SK-N-SH (cell line): ENCODE measurements at regions of chr15 and their contacts with region 1.

Region 1: DNA sequence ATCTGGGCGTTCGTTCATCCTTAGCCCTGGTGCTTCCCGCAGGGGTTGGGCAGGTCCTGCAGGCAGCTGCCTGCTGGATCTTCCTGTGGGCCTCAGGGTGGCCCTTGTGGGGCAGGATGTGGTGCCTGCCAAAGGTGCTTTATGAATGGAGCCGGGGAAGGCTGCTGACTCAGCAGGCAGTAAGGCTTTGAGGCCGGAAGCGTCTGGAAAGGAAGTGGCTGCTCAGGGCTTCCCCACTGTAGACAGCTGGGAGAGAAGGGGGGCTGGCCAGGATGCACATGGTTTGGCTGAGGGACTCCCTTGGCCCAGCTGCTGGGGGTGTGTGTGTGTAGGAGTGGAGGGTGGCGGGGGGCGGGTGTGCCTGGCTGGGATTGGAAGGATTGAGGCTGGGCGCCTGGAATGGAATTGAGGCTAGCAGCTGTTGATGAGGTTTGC is 12.9 kb downstream of the CD276 start:
- DNase-seq: peak; percentile 84
- H3K4me3 ChIP-seq: peak overlapping the region in 1 of 2 experiments; percentile 13; a peak in 1 of 4 replicates
- H3K27ac ChIP-seq: peak overlapping the region; percentile 58 to 69
- H3K4me1 ChIP-seq: peaks cover 9 to 20% of the 10 kb centered on the region in 2 experiments; a peak in 2 of 4 replicates
- H3K27me3 ChIP-seq: no peaks in the 10 kb centered on the region
- CTCF ChIP-seq: no peak
- EP300 ChIP-seq: peak; percentile 35 to 54; a peak in 1 of 4 replicates
- RAD21 ChIP-seq: 0 out of 2 replicates have a peak, but pooled peaks have one; percentile 1

Region 2: GRCh38 chr15:73284090-73284716 is 412.8 kb before region 1 on chr15:
- CTCF ChIA-PET with region 1: interaction called, 26 read pairs
- POLR2A ChIA-PET with region 1: no interaction called
- DNase-seq: peak; percentile 56
- H3K4me3 ChIP-seq: no peak overlapping the region
- H3K27ac ChIP-seq: peak overlapping the region; percentile 26 to 37; a peak in 3 of 4 replicates
- H3K4me1 ChIP-seq: peaks cover 5 to 11% of the 10 kb centered on the region in 2 experiments
- H3K27me3 ChIP-seq: no peaks in the 10 kb centered on the region
- CTCF ChIP-seq: peak; percentile 65
- EP300 ChIP-seq: peak in 1 of 2 experiments; percentile 39; a peak in 1 of 4 replicates
- RAD21 ChIP-seq: peak; percentile 80

Region 3: GRCh38 chr15:73560501-73561117 is 136.4 kb before region 1 on chr15:
- CTCF ChIA-PET with region 1: interaction called, 96 read pairs
- POLR2A ChIA-PET with region 1: no interaction called
- DNase-seq: peak; percentile 42
- H3K4me3 ChIP-seq: no peak overlapping the region
- H3K27ac ChIP-seq: no peak overlapping the region
- H3K4me1 ChIP-seq: peaks cover 0 to 2% of the 10 kb centered on the region in 2 experiments; a peak in 2 of 4 replicates
- H3K27me3 ChIP-seq: no peaks in the 10 kb centered on the region
- CTCF ChIP-seq: peak; percentile 61
- EP300 ChIP-seq: no peak
- RAD21 ChIP-seq: peak; percentile 81

Region 4: DNA sequence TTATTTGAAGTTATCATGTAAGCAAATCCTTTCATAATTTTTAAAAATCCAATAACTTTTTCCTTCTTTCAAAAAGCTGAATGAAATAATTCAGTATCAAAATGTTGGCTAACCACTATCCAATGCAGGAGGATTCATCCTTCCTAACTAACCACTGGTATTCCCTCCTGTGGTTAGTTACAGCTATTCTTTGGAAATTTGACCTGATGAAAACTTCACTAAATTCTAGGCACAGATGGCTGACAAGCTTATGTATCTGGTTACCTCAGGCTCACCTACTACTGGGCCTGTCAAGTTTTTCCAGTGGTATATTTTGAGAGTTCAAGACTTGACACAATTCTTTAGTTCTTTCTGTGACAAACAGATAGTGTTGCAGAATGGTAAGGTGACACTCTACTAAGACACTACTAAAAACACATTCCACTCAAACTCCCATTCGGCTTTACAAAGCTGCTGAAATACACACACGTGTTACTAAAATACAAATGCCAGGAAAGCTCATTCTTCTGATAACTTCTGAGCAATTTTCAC is 79.7 kb before region 1 on chr15:
- CTCF ChIA-PET with region 1: interaction called, 10 read pairs
- POLR2A ChIA-PET with region 1: no interaction called
- DNase-seq: no peak
- H3K4me3 ChIP-seq: no peak overlapping the region
- H3K27ac ChIP-seq: no peak overlapping the region
- H3K4me1 ChIP-seq: peaks cover 0 to 6% of the 10 kb centered on the region in 2 experiments; a peak in 3 of 4 replicates
- H3K27me3 ChIP-seq: no peaks in the 10 kb centered on the region
- CTCF ChIP-seq: no peak
- EP300 ChIP-seq: no peak
- RAD21 ChIP-seq: no peak

Region 5: GRCh38 chr15:73650416-73651126 is 46.5 kb before region 1 on chr15:
- CTCF ChIA-PET with region 1: interaction called, 17 read pairs
- POLR2A ChIA-PET with region 1: no interaction called
- DNase-seq: peak; percentile 49
- H3K4me3 ChIP-seq: peak overlapping the region in 1 of 2 experiments; percentile 26; a peak in 1 of 4 replicates
- H3K27ac ChIP-seq: peak overlapping the region; percentile 39 to 77; a peak in 3 of 4 replicates
- H3K4me1 ChIP-seq: no peaks in the 10 kb centered on the region; a peak in 2 of 4 replicates
- H3K27me3 ChIP-seq: no peaks in the 10 kb centered on the region
- CTCF ChIP-seq: no peak
- EP300 ChIP-seq: peak in 1 of 2 experiments; percentile 29; a peak in 1 of 4 replicates
- RAD21 ChIP-seq: no peak

Region 6: DNA sequence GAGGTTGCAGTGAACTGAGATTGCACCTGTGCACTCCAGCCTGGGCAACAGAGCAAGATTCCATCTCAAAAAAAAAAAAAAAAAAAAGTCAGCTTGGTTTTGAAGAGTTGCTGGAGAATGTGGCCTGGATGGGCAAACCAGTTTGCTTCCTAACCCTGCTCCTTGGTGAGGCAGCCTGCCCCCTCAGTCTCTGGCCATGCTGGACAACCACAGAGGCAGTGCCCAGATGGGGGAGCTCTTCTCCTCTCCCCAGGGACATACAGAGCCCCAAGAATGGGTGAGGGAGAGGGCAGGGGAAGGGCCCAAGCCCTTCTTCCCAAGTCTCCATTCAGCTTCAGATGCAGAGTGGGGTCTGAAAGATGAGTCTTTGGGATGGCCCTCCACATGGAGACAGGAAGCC is 15.0 kb after region 1 on chr15:
- CTCF ChIA-PET with region 1: interaction called, 41 read pairs
- POLR2A ChIA-PET with region 1: no interaction called
- DNase-seq: no peak
- H3K4me3 ChIP-seq: no peak overlapping the region
- H3K27ac ChIP-seq: no peak overlapping the region
- H3K4me1 ChIP-seq: peaks cover 0 to 4% of the 10 kb centered on the region in 2 experiments; a peak in 1 of 4 replicates
- H3K27me3 ChIP-seq: no peaks in the 10 kb centered on the region
- CTCF ChIP-seq: peak; percentile 30; the same call in 1 of the 2 replicates
- EP300 ChIP-seq: no peak
- RAD21 ChIP-seq: peak; percentile 36; the same call in 1 of the 2 replicates

Region 7: GRCh38 chr15:73746883-73747282 is 49.8 kb after region 1 on chr15:
- CTCF ChIA-PET with region 1: no interaction called
- POLR2A ChIA-PET with region 1: no interaction called
- DNase-seq: no peak
- H3K4me3 ChIP-seq: no peak overlapping the region
- H3K27ac ChIP-seq: no peak overlapping the region
- H3K4me1 ChIP-seq: peaks cover 7% of the 10 kb centered on the region in 2 experiments; a peak in 1 of 4 replicates
- H3K27me3 ChIP-seq: no peaks in the 10 kb centered on the region
- CTCF ChIP-seq: no peak
- EP300 ChIP-seq: no peak
- RAD21 ChIP-seq: no peak

Region 8: DNA sequence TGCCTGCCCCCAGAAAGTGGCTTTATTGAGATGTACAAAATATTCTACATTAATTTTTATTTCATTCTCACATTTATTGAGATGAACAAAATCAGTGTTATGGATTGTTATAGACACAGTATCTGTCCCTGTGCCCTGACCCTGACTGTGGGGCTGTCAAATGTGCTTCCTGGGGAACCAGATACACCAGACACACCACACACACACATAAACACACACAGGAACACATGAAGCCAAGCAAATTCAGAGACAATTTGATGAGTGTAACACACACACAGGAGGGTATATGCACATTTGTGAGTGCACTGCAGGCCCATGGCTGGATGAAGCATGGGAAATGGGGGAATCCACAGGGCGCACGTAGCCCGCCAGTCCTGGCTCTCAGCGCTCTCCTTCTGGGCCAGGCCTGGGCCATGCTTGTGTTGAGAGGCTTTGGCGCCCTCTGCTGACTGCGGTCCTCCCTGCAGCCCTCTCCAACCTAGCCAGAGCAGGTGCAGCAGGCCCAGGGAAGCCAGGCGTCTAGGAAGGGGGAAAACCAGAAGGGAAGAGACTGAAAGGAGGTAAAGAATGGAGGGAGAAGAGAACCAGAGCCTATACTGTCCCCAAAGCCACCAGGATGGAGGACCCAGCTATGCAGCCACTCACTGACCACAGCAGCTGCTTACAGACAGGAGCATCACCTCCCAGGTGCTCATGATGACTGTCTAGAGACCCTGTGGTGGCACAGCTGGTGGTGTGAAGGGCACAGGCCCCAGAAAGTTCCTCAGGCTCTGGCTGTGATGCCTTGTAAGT is 211.2 kb after region 1 on chr15:
- CTCF ChIA-PET with region 1: interaction called, 19 read pairs
- POLR2A ChIA-PET with region 1: no interaction called
- DNase-seq: peak; percentile 86
- H3K4me3 ChIP-seq: no peak overlapping the region; a peak in 1 of 4 replicates
- H3K27ac ChIP-seq: no peak overlapping the region
- H3K4me1 ChIP-seq: peaks cover 0 to 2% of the 10 kb centered on the region in 2 experiments; a peak in 1 of 4 replicates
- H3K27me3 ChIP-seq: no peaks in the 10 kb centered on the region
- CTCF ChIP-seq: peak; percentile 90
- EP300 ChIP-seq: no peak
- RAD21 ChIP-seq: peak; percentile 91